MCF 10A (cell line): ENCODE measurements at regions of chr2 and their contacts with region 1.

Region 1: DNA sequence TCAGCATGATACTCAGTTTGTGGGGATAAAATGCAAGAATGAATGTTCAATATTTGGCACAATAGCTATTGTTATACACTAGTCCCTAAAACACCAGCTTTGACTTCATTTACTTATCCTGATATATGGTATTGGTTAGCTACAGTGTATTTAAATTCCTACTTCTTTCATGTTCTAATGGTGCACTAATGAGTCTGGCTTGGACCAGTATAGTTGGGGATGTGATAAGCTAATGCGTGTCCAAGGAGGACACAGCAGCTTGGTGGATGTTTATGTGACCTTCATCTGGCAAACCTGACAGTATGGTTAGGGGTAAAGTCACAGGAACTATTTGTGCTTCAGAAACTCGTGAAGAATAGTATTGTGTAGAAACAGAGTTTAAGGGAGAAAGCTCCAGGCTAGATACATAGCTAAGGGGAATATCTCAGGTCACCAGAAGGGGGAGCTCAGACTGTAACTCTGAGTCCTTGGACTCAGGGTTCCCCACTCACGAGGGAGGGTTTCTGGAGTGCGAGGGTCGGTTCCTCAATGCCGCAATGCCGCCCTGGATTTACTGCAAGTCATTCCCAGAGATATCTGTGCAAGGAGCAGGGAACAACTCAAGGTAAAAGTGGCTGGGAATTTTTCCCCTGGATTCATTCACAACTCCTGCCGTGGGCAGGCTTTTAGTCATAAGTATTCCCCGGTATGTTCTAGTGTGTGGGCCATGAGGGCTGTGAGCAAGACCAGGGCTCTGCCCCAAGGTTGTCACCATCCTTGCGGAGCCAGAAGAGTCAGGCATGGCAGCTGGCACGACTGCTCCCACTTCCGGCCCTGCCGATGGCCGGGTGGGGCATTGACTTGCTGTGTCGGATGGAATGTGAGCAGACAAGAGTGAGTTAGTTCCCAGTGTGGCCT is 14.5 kb downstream of the IL1R2 start:
- DNase-seq: peak; percentile 71
- H3K4me3 Mint-ChIP-seq: no peak overlapping the region
- H3K27ac Mint-ChIP-seq: no peak overlapping the region
- H3K4me1 Mint-ChIP-seq: no peaks in the 10 kb centered on the region
- H3K27me3 Mint-ChIP-seq: no peaks in the 10 kb centered on the region
- CTCF ChIP-seq: peak; percentile 56

Region 2: DNA sequence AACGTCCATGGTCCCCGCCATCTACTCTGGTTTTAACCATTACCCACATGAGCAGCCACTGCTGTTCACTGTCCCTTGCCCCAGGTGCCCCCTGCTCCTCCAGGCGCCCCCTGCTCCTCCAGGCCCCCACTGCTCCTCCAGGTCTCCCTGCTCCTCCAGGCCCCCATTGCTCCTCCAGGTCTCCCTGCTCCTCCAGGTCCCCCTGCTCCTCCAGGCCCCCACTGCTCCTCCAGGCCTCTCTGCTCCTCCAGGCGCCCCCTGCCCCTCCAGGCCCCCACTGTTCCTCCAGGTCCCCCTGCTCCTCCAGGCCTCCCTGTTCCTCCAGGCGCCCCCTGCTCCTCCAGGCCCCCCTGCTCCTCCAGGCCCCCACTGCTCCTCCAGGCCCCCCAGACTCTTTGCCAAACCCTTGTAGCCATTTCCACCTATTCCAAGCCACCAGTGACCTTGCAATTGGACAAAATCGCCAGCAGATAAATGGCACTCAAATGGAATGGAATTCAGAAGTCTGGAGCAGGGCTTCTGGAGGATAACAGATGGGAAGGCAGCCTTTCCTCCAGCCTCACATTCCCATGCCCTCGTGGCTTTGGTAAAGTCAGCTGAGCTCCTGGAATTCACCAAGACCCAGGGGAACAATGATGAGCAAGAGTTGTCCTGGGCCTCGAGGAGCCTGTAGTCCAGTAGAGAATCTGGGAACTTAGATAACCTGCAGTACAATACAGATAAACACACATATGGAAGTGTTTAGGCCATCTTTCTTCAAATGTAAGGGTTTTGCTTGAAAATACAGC is 1017.4 kb before region 1 on chr2:
- CTCF ChIA-PET with region 1: no interaction called
- POLR2A ChIA-PET with region 1: no interaction called
- intact Hi-C with region 1: no loop called
- DNase-seq: no peak
- H3K4me3 Mint-ChIP-seq: no peak overlapping the region
- H3K27ac Mint-ChIP-seq: no peak overlapping the region
- H3K4me1 Mint-ChIP-seq: no peaks in the 10 kb centered on the region
- H3K27me3 Mint-ChIP-seq: no peaks in the 10 kb centered on the region
- CTCF ChIP-seq: no peak

Region 3: DNA sequence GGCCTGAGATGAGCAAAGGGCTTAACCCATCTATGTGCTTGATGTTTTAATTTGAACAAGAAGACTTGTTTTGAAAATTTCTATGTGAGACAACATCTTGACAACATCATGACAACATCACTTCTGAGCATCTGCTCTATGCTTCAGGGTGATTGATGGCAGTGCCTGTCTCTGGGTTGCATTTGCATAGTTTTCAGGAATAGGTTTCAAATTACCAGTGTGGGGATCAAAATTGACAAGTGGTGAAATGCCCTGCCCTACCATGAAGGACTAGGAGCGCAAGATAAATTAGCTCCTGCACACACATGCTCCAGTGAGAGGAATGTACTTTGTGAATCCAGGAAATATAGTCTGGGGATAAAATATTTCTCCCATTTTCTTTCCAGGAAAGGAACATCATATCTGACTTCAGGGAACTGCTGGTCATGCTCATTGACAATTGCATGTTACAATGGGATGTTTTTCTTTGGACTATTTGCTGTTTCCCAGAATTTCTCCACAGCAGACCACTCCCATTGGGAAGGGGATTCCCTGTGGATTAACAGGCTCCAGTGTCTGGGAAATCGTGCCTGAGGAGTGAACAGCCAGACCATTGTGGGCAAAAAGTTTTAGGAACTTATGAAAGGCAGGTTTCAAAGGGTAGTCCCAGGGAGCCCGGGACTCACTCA is 59.7 kb before region 1 on chr2:
- CTCF ChIA-PET with region 1: no interaction called
- POLR2A ChIA-PET with region 1: no interaction called
- intact Hi-C with region 1: no loop called
- DNase-seq: no peak
- H3K4me3 Mint-ChIP-seq: no peak overlapping the region
- H3K27ac Mint-ChIP-seq: no peak overlapping the region
- H3K4me1 Mint-ChIP-seq: no peaks in the 10 kb centered on the region
- H3K27me3 Mint-ChIP-seq: no peaks in the 10 kb centered on the region
- CTCF ChIP-seq: no peak

Region 4: DNA sequence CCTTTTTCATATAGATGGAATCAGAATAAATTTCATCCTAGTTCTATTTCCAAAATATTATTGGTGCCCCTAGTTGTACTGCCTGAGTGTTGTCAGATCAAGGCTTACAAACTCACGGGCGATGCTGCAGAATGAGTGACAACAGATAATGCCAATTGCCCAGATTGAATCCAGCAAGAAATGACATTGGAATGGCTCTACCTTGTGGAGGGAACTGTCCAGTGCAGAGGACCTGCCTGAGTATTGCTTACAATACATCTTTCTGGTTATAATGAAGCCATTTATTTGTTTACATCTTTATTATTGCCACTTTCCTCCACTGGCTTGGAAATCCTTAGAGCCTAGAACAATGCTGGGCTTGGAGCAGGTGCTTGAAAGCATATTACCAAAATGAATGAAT is 22.3 kb before region 1 on chr2:
- CTCF ChIA-PET with region 1: interaction called, 17 read pairs
- POLR2A ChIA-PET with region 1: interaction called, 3 read pairs
- intact Hi-C with region 1: no loop called
- DNase-seq: peak; percentile 60
- H3K4me3 Mint-ChIP-seq: no peak overlapping the region
- H3K27ac Mint-ChIP-seq: no peak overlapping the region
- H3K4me1 Mint-ChIP-seq: peaks cover 42% of the 10 kb centered on the region
- H3K27me3 Mint-ChIP-seq: no peaks in the 10 kb centered on the region
- CTCF ChIP-seq: peak; percentile 33

Region 5: GRCh38 chr2:101993772-101994171 is 12.5 kb before region 1 on chr2:
- CTCF ChIA-PET with region 1: interaction called, 36 read pairs
- POLR2A ChIA-PET with region 1: no interaction called
- intact Hi-C with region 1: no loop called
- DNase-seq: no peak
- H3K4me3 Mint-ChIP-seq: no peak overlapping the region
- H3K27ac Mint-ChIP-seq: no peak overlapping the region
- H3K4me1 Mint-ChIP-seq: peaks cover 12% of the 10 kb centered on the region
- H3K27me3 Mint-ChIP-seq: peaks cover 30% of the 10 kb centered on the region
- CTCF ChIP-seq: no peak

Region 6: GRCh38 chr2:102206666-102207341 is 200.6 kb after region 1 on chr2:
- CTCF ChIA-PET with region 1: no interaction called
- POLR2A ChIA-PET with region 1: no interaction called
- intact Hi-C with region 1: no loop called
- DNase-seq: no peak
- H3K4me3 Mint-ChIP-seq: no peak overlapping the region
- H3K27ac Mint-ChIP-seq: no peak overlapping the region
- H3K4me1 Mint-ChIP-seq: no peaks in the 10 kb centered on the region
- H3K27me3 Mint-ChIP-seq: no peaks in the 10 kb centered on the region
- CTCF ChIP-seq: no peak

Region 7: GRCh38 chr2:102235491-102235890 is 229.3 kb after region 1 on chr2:
- CTCF ChIA-PET with region 1: interaction called, 37 read pairs
- POLR2A ChIA-PET with region 1: interaction called, 4 read pairs
- intact Hi-C with region 1: loop called (anchors 1 kb)
- DNase-seq: peak; percentile 44
- H3K4me3 Mint-ChIP-seq: no peak overlapping the region
- H3K27ac Mint-ChIP-seq: no peak overlapping the region
- H3K4me1 Mint-ChIP-seq: peaks cover 5% of the 10 kb centered on the region
- H3K27me3 Mint-ChIP-seq: no peaks in the 10 kb centered on the region
- CTCF ChIP-seq: peak; percentile 24

Region 8: GRCh38 chr2:102355526-102356380 is 349.5 kb after region 1 on chr2 and contains the start of gene IL18R1:
- CTCF ChIA-PET with region 1: interaction called, 5 read pairs
- POLR2A ChIA-PET with region 1: no interaction called
- intact Hi-C with region 1: loop called (anchors 5 kb)
- DNase-seq: peak; percentile 71
- H3K4me3 Mint-ChIP-seq: peak within 1 kb of the TSS; percentile 87
- H3K27ac Mint-ChIP-seq: peak within 1 kb of the TSS; percentile 68
- H3K4me1 Mint-ChIP-seq: peaks cover 19% of the 10 kb centered on the region
- H3K27me3 Mint-ChIP-seq: no peaks in the 10 kb centered on the region
- CTCF ChIP-seq: peak; percentile 85
- total RNA-seq, gene IL18R1: 3.5 and 6.7 TPM in 2 replicates

Region 9: DNA sequence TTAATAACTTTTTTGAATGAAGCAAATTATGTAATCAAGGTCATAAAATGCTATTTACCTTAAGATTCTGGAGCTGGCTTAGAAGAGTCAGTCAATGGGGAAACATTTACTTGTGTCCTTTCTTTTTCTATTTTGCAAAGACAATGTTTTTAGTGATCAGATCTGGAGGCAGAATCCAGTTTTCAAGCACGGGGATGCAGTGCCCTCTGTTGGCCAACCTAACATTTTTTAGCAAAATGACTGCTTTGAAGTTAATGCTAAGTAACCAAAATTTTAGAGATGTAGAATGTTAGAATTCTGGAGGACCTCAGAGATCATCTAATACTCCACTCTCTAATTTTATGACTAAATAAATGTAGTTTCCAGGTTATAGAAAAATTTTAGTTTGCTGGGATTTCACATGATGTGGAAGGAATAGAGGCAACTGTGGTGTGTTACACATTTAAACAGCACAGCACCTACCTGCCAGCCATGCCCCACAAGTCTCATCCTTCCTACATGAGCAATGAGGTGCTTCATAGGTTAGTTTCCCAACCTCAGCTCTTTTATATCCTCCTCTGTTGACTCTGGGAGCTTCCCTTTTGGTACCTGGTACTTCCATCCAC is 443.2 kb after region 1 on chr2:
- CTCF ChIA-PET with region 1: interaction called, 4 read pairs
- POLR2A ChIA-PET with region 1: no interaction called
- intact Hi-C with region 1: loop called (anchors 5 kb)
- DNase-seq: peak; percentile 49
- H3K4me3 Mint-ChIP-seq: no peak overlapping the region
- H3K27ac Mint-ChIP-seq: no peak overlapping the region
- H3K4me1 Mint-ChIP-seq: no peaks in the 10 kb centered on the region
- H3K27me3 Mint-ChIP-seq: no peaks in the 10 kb centered on the region
- CTCF ChIP-seq: peak; percentile 64